ENCODE measurements at regions of chr6 and their contacts with region 1.

Region 1: GRCh38 chr6:8102122-8102958 is at the start of gene EEF1E1:
- DNase-seq: peak; percentile 91 to 95
- ATAC-seq: peak; percentile 100
- H3K4me3 ChIP-seq: peak within 1 kb of the TSS; percentile 98
- H3K27ac ChIP-seq: peak within 1 kb of the TSS; percentile 80
- H3K4me1 ChIP-seq: no peaks in the 10 kb centered on the region
- H3K27me3 ChIP-seq: peaks cover 0 to 11% (median 2%) of the 10 kb centered on the region in 3 donors
- CTCF ChIP-seq: no peak
- total RNA-seq, gene EEF1E1: 12.8 to 14.0 (median 13.5) TPM

Region 2: DNA sequence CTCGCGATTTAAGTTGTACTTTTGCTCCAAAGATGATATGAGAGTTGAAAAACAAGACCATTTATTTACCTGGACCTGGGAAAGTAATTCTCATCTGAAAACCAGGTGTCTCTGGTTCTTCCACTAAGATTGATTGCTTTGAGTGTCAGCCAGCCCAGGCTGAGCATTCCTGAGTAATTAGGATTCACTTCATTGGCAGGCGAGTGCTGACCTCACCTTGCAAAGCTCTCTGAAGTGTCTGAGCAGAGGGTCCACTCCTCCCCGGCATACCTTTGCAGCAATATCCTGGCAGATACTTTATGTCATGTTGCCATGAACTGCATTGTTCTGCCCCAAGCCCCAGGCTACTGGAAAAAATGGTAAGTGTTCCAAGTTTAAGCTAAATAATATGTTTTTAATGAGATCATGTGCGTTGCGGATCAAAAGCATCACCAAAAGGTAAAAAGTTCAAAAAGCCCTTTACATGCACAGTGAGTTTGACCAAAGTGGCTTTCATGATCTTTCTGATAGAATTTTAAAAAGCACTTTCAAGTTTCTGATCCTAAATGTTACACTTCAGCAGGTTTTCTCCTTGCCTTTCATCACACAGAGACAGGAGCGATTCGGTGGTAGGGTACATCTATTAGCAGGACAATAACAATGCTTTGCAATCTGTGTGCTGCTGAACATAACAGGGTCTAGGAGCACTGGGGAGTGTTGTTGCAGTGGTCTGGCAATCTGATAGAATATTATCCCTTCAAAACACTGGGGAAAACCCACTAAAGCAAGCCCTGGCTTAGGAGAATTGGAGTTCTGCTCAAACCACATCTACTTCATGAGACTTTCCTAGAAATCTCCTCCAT is 127.8 kb after region 1 on chr6:
- intact Hi-C with region 1: no loop called
- DNase-seq: no peak
- ATAC-seq: no peak
- H3K4me3 ChIP-seq: no peak overlapping the region
- H3K27ac ChIP-seq: no peak overlapping the region
- H3K4me1 ChIP-seq: no peaks in the 10 kb centered on the region
- H3K27me3 ChIP-seq: peaks cover 0 to 2% (median 0%) of the 10 kb centered on the region in 3 donors
- CTCF ChIP-seq: no peak

Region 3: DNA sequence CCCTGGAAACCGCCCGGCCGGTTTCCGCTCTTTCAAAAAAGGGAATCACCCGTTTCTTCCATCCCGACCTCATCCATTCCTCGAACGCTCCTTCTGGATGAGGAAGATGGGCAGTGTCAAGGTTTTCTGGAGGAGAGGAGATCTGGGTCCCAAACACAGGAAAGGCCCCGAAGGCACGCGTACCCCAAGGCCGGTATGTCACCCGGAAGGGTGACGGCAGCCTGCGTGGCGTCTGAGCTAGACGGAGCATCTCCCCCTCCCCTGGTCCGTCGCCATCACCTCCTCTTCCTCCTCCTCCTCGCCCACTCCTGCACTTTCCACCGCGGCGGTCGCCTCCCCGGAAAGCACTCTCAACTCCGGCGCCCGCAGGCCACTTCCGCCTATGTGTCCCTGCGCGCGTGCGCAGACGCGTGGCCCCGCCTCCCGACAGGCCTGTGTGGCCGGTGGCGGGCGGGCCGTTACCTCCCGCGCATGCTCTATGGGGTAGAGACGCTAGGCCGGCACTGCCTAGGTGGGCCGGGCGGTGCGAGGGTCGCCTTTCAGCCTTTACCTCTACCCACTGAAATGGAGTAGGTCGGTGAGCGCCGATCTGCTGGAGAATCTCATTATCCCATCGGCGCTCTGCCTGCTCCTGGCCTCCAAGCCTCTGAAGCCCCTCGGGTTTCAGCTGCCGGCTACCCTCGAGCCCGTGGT is 333.0 kb after region 1 on chr6 and contains the start of gene SLC35B3:
- intact Hi-C with region 1: loop called in 1 of 2 experiments (anchors 10 kb)
- DNase-seq: peak; percentile 97 to 98
- ATAC-seq: peak; percentile 100
- H3K4me3 ChIP-seq: peak within 1 kb of the TSS; percentile 87
- H3K27ac ChIP-seq: peak within 1 kb of the TSS; percentile 80
- H3K4me1 ChIP-seq: peaks cover 22% of the 10 kb centered on the region
- H3K27me3 ChIP-seq: no peaks in the 10 kb centered on the region
- CTCF ChIP-seq: no peak
- total RNA-seq, gene SLC35B3: 2.9 to 4.3 (median 3.6) TPM

Measured in psoas muscle (tissue), 8 donors.